HAP-1 (cell line): ENCODE measurements at regions of chr22 and their contacts with region 1.

Region 1: GRCh38 chr22:41636467-41636866 is 15.4 kb downstream of the XRCC6 start:
- DNase-seq: no peak
- H3K4me3 ChIP-seq: no peak overlapping the region
- H3K4me1 ChIP-seq: no peaks in the 10 kb centered on the region
- H3K27me3 ChIP-seq: no peaks in the 10 kb centered on the region

Region 2: DNA sequence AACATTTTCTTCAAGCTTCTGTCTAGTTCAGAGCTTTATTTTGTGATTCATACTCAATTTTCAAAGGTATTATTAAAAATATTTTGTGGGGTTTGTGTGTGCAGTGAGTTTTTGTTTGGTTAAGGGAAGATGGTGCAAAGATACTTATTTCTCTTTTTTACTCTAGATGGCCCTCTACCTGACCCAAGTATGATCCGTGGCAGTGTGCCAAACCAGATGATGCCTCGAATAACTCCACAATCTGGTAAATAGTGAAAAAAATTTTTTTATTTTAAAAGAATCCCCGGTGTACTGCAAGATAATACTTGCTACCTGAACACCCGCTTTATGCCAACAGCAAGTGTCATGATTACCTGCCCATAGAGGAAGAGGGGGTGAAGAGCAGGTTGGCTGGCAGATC is 489.9 kb before region 1 on chr22:
- in situ Hi-C with region 1: loop called (anchors 25 kb)
- DNase-seq: no peak
- H3K4me3 ChIP-seq: no peak overlapping the region
- H3K4me1 ChIP-seq: no peaks in the 10 kb centered on the region
- H3K27me3 ChIP-seq: no peaks in the 10 kb centered on the region